Activated CD4-positive, alpha-beta T cell treated with anti-CD3 and anti-CD28 coated beads, Interleukin-2, amount 10 ng/mL, durations not matched to agents 24 days and 14 days (primary cell): ENCODE measurements at regions of chr15 and their contacts with region 1.

Region 1: DNA sequence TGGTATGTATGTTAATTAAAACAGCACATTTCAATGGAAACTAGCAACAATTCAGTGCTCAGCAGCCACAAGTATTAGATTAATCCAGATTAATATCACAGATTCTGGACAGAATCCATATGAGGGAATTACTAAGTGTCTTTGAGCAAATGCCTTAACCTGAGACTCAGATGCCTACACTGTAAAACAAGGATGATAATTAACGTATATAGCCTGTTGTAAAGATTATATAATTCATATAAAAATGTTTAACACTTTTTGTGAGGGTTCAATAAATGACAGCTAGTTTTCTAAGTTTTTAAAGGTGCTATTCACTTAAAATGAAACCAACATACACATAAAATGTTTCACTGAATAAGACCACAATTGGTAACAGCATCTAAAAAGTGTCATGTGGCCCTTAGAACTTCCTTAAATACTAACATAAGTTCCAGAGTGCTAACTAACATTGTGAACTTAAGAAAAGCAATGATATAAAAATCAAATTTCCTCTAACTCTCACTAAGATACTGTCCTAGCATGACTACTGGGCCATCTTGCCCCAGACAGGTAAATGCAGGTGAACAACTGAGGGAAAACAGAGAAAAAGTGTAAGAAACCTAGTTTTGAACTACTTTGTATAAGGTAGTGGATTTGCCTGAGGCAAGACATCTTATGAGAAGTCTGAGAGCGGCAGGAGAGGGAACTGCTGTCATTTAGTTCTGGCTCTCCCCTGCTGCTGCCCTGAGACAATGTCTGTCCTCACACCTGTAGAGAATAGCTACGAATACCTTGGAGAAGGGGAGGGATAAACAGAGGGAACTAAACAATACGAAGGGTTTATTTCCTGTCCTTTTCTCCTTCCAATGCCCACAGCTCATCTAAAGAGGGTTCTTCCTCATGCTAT is 151.3 kb downstream of the ADAM10 start:
- DNase-seq: no peak
- H3K4me3 Mint-ChIP-seq: no peak overlapping the region
- H3K27ac Mint-ChIP-seq: no peak overlapping the region
- H3K4me1 Mint-ChIP-seq: peaks cover 27% of the 10 kb centered on the region
- H3K27me3 Mint-ChIP-seq: no peaks in the 10 kb centered on the region

Region 2: GRCh38 chr15:58475573-58476524 is 122.3 kb before region 1 on chr15:
- intact Hi-C with region 1: loop called (anchors 10 kb)
- DNase-seq: no peak
- H3K4me3 Mint-ChIP-seq: peak overlapping the region; percentile 46
- H3K27ac Mint-ChIP-seq: peak overlapping the region; percentile 92
- H3K4me1 Mint-ChIP-seq: peaks cover 54% of the 10 kb centered on the region
- H3K27me3 Mint-ChIP-seq: no peaks in the 10 kb centered on the region

Region 3: DNA sequence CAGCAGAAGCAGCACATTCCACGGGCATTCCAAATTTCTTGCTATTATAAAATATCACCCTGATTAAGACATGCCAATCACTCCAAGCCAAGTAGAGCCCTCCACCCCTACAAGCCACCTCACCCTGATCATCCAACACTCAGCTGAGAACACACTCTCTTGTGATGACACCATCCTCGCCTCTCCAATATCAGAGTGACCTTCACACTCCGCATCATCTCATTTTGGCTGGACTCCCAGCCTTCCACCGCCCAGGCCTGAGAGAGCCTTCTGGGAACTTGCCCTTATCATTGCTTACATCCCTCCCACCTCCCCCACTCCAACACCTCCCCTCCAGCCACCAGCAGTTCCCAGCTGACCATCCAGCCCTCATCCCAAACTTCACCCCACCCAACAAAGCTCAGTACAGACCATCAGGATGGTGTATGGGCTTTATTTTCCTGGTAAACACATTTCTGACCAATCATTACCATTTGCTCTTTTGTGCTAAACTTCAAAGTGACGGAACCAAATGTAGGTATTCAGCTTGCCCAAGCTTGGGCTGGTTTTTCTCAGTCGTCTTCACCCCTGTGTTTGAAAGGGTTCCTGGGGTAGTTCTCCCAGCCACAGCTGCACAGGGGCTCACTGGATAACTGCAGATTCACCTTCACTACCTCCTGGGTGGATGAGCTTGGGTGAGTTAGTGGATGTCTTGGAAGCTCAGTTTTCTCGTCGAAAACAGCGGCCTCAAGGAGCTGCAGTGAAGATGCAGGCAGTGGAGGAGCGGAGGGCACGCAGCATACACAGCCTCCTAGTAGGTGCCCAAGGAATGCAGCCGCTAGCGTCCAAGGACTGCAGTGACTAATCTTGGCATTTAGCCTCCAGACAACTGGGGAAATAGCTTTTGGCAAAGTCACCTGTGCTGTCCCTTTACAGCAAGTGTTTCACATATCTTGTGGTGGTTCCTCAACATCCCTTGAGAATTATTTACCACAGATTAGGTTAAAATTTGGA is 51.3 kb before region 1 on chr15:
- intact Hi-C with region 1: loop called (anchors 1 kb)
- DNase-seq: no peak
- H3K4me3 Mint-ChIP-seq: peak overlapping the region; percentile 25
- H3K27ac Mint-ChIP-seq: peak overlapping the region; percentile 97
- H3K4me1 Mint-ChIP-seq: peaks cover 60% of the 10 kb centered on the region
- H3K27me3 Mint-ChIP-seq: no peaks in the 10 kb centered on the region

Region 4: GRCh38 chr15:58628206-58628947 is 30.2 kb after region 1 on chr15:
- intact Hi-C with region 1: loop called (anchors 5 kb)
- DNase-seq: peak; percentile 69
- H3K4me3 Mint-ChIP-seq: peak overlapping the region; percentile 84
- H3K27ac Mint-ChIP-seq: peak overlapping the region; percentile 93
- H3K4me1 Mint-ChIP-seq: peaks cover 49% of the 10 kb centered on the region
- H3K27me3 Mint-ChIP-seq: no peaks in the 10 kb centered on the region

Region 5: GRCh38 chr15:58704155-58704865 is 106.1 kb after region 1 on chr15:
- intact Hi-C with region 1: loop called (anchors 10 kb)
- DNase-seq: no peak
- H3K4me3 Mint-ChIP-seq: no peak overlapping the region
- H3K27ac Mint-ChIP-seq: no peak overlapping the region
- H3K4me1 Mint-ChIP-seq: peaks cover 43% of the 10 kb centered on the region
- H3K27me3 Mint-ChIP-seq: no peaks in the 10 kb centered on the region